H1 (cell line): ENCODE measurements at regions of chrX and their contacts with region 1.

Region 1: DNA sequence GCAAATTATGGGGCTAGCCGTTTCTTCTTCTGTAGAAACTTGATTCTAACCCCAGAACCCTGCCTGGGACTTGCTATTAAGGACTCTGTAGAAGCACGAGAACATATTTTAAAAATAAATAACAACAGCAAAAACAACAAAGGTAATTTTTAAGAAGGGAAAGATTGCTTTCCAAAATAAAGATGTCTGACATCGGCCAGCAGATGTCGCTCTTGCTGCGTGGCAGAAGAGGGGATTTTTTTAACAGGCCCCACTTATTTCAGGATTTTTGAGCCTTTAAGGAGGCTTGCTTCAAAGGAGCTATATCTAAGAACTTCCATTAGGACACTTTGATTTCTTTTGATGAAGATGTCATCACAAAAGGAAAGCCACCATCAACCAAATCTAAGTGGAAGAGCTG is 62.8 kb upstream of the EGFL6 start:
- DNase-seq: peak in 1 of 2 experiments; percentile 44
- H3K4me3 ChIP-seq: no peak overlapping the region
- H3K27ac ChIP-seq: no peak overlapping the region
- H3K4me1 ChIP-seq: no peaks in the 10 kb centered on the region
- H3K27me3 ChIP-seq: no peaks in the 10 kb centered on the region
- CTCF ChIP-seq: peak; percentile 14 to 62 (median 49)
- EP300 ChIP-seq: no peak
- POLR2A ChIP-seq: no peak
- RAD21 ChIP-seq: peak; percentile 84 to 89

Region 2: GRCh38 chrX:13646154-13646549 is 139.6 kb after region 1 on chrX:
- CTCF ChIA-PET with region 1: interaction called, 58 read pairs
- POLR2A ChIA-PET with region 1: no interaction called
- DNase-seq: peak; percentile 15 to 58
- H3K4me3 ChIP-seq: no peak overlapping the region
- H3K27ac ChIP-seq: no peak overlapping the region
- H3K4me1 ChIP-seq: peaks cover 0 to 3% (median 0%) of the 10 kb centered on the region in 4 experiments; a peak in 1 of 7 replicates
- H3K27me3 ChIP-seq: no peaks in the 10 kb centered on the region
- CTCF ChIP-seq: peak; percentile 61 to 74 (median 70)
- EP300 ChIP-seq: no peak
- POLR2A ChIP-seq: no peak
- RAD21 ChIP-seq: peak; percentile 79 to 85